Adrenal gland (tissue), 19 donors: ENCODE measurements at regions of chr17 and their contacts with region 1.

Region 1: GRCh38 chr17:74042744-74043486 is 160.6 kb upstream of the RPL38 start:
- DNase-seq: peak; percentile 67 to 90 (median 81)
- H3K4me3 ChIP-seq: no peak overlapping the region
- H3K27ac ChIP-seq: no peak overlapping the region
- H3K4me1 ChIP-seq: no peaks in the 10 kb centered on the region
- H3K27me3 ChIP-seq: no peaks in the 10 kb centered on the region
- CTCF ChIP-seq: no peak
- POLR2A ChIP-seq: no peak

Region 2: GRCh38 chr17:73510981-73511718 is 531.8 kb before region 1 on chr17:
- intact Hi-C with region 1: loop called in 1 of 2 experiments (anchors 5 kb)
- DNase-seq: no peak
- H3K4me3 ChIP-seq: no peak overlapping the region
- H3K27ac ChIP-seq: no peak overlapping the region
- H3K4me1 ChIP-seq: no peaks in the 10 kb centered on the region
- H3K27me3 ChIP-seq: no peaks in the 10 kb centered on the region
- CTCF ChIP-seq: no peak
- POLR2A ChIP-seq: no peak